PC-3 (cell line): ENCODE measurements at regions of chr19 and their contacts with region 1.

Region 1: GRCh38 chr19:55206664-55207500 is 2.4 kb downstream of the PTPRH start:
- DNase-seq: peak; percentile 96
- ATAC-seq: peak; percentile 72
- H3K4me3 ChIP-seq: peak overlapping the region; percentile 29; the same call in 1 of the 2 replicates
- H3K27ac ChIP-seq: peak overlapping the region; percentile 65
- H3K4me1 ChIP-seq: peaks cover 33% of the 10 kb centered on the region
- H3K27me3 ChIP-seq: no peaks in the 10 kb centered on the region
- CTCF ChIP-seq: no peak

Region 2: DNA sequence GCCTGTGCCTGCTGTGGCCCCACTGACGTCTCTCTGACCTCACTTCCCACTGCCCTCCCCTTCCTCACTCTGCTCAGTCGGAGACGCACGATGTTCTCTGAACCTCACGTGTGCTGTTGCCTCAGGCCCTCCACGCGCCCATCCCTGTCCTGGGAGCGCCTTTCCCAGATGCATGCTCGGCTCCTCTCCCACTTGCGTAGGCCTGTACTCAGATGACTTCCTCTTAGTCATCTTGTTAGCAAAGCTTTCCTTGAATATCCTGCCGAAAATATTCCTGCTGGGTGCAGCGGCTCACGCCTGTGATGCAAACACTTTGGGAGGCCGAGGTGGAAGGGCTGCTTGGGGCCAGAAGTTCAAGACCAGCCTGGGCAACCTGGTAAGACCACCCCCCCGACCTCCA is 17.5 kb before region 1 on chr19:
- CTCF ChIA-PET with region 1: interaction called, 3 read pairs
- POLR2A ChIA-PET with region 1: interaction called, 9 read pairs
- intact Hi-C with region 1: loop called (anchors 1 kb)
- DNase-seq: peak; percentile 99
- ATAC-seq: peak; percentile 99
- H3K4me3 ChIP-seq: no peak overlapping the region
- H3K27ac ChIP-seq: peak overlapping the region; percentile 89
- H3K4me1 ChIP-seq: peaks cover 12% of the 10 kb centered on the region
- H3K27me3 ChIP-seq: no peaks in the 10 kb centered on the region
- CTCF ChIP-seq: no peak

Region 3: DNA sequence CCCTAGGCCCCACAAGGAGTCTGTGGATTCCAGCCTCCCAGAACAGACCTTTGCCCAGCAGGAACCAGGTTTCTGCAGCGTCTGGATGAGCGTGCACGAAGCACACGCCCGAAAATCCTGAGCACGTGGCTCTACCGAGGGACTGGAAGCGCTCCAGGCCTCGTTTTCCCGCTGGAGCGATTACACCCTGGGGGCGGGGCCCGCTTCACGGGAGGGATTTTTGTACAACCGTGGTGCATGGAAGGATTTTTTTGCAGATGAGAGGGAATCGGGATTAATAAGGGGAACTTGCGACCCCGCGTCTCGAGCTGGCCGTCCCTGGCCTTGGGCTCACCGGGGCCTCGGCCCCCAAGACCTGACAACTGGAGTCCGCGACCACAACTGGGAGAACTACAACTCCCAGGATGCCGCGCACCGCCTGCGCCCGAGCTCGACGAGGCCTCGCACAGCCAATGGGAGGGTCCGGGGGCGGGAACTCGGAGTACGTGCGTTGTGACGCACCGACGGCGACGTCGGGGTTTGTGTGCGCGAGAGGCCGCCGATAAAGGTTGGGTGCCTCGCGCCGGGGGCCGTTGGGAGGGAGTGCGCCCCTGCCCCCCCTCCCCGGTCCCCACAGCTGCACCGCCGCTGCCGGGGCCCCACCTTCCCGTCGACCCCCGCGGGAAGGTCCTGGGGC is 269.4 kb after region 1 on chr19 and contains the start of gene ZNF628:
- CTCF ChIA-PET with region 1: no interaction called
- POLR2A ChIA-PET with region 1: interaction called, 12 read pairs
- intact Hi-C with region 1: no loop called
- DNase-seq: peak; percentile 99
- ATAC-seq: peak; percentile 95
- H3K4me3 ChIP-seq: peak within 1 kb of the TSS; percentile 76
- H3K27ac ChIP-seq: peak within 1 kb of the TSS; percentile 55
- H3K4me1 ChIP-seq: peaks cover 18% of the 10 kb centered on the region
- H3K27me3 ChIP-seq: no peaks in the 10 kb centered on the region
- CTCF ChIP-seq: no peak
- total RNA-seq, gene ZNF628: 11.8 and 24.2 TPM in 2 replicates